ENCODE measurements at regions of chr17 and their contacts with region 1.

Region 1: GRCh38 chr17:40358323-40359038 is 6.1 kb downstream of the GJD3 start:
- DNase-seq: peak; percentile 78 to 95
- ATAC-seq: peak; percentile 56

Region 2: DNA sequence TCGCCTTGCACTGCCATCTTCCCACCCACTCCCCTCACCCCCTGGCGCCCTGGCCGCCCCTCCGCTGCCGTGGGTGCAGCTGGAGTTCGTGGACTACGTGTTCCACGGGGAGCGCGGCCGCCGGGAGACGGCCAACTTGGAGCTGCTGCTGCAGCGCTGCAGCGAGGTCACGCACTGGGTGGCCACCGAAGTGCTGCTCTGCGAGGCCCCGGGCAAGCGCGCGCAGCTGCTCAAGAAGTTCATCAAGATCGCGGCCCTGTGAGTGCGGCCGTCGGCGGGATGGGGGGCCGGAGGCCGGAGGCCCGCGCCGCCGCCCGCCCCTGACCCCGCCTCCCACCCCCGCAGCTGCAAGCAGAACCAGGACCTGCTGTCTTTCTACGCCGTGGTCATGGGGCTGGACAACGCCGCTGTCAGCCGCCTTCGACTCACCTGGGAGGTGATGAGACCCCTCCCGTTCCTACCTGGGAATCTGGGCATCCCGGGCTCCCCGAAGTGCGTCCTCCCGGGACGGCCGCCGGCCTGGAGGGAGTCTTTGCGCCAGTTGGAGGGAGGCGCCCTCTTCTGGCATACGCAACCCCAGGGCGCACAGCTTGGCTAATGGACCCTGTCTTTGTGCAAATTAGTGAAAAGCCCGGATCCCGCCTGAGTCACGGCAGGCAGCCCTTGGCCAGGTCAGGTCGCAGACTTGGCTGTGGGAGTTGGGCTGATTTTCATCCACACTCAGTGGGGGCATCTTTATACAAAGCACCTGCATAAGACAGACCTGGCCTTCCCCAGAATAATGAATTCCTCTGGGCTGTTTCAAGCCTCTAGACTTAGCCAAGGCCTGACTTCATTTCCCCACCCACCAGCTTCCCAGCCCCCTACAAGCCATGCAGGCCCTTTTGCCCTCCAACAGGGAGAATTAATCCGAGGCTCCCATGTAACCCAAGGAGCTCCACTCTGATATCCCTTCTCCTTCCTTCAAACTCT is 167.0 kb before region 1 on chr17:
- intact Hi-C with region 1: loop called in 1 of 2 experiments (anchors 10 kb)
- DNase-seq: peak; percentile 53 to 72
- ATAC-seq: peak; percentile 23

Region 3: GRCh38 chr17:40303009-40303657 is 55.3 kb before region 1 on chr17:
- intact Hi-C with region 1: loop called (anchors 2 to 5 kb)
- DNase-seq: peak; percentile 27 to 63
- ATAC-seq: peak; percentile 52

Region 4: DNA sequence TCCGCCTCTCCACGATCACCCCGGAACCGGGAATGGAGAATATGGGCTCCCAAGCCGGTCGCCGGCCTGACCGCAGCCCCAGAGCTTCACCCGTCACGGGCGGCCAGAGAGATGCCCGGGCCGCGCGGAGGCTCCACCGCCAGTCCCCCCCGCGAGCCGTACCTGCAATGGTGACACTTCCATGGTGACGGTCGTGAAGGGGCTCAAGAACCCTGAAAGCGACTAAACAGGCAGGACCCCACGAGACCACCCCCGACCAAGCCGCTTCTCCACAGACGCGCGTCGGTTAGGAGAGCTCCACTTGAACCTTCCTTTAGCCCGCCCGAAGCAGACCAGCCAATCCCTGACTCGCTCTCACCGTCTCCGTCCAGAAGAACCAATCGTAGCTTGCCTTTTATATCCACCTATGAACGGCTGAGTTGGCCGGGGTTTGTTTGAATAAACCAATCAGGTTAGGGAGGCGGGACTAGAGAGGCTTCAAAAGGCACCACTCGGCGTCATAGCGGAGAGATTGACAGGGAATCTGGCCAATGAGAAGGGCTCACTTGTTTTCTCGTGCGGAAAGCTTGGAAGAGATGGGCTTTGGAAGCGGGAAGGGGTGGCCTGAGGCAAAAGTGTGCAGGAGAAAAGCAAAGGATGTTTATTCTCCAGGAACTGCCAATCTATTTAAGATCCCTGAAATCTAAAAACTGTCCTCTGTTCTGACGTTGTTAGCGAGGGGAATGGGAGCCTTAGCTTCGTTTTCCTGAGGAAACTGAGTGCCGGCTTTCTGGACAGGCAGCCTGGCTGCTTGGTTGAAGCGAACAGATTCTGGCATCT is 59.3 kb after region 1 on chr17 and contains the start of gene TOP2A:
- intact Hi-C with region 1: loop called in 1 of 2 experiments (anchors 2 kb)
- DNase-seq: peak; percentile 94 to 99
- ATAC-seq: peak; percentile 97
- total RNA-seq, gene TOP2A: 10.9 to 30.3 TPM